ENCODE measurements at regions of chr9 and their contacts with region 1.

Region 1: GRCh38 chr9:21789541-21790037 is 12.8 kb upstream of the MTAP start:
- DNase-seq: peak; percentile 92
- ATAC-seq: peak; percentile 76
- H3K4me3 ChIP-seq: no peak overlapping the region
- H3K27ac ChIP-seq: peak overlapping the region; percentile 97
- H3K4me1 ChIP-seq: peaks cover 28 to 57% of the 10 kb centered on the region in 2 experiments
- H3K27me3 ChIP-seq: no peaks in the 10 kb centered on the region
- CTCF ChIP-seq: peak; percentile 50 to 96 (median 85)
- POLR2A ChIP-seq: no peak
- RAD21 ChIP-seq: peak; percentile 91

Region 2: GRCh38 chr9:21506626-21507484 is 282.7 kb before region 1 on chr9:
- CTCF ChIA-PET with region 1: no interaction called
- POLR2A ChIA-PET with region 1: no interaction called
- RAD21 ChIA-PET with region 1: no interaction called
- intact Hi-C with region 1: no loop called
- DNase-seq: no peak
- ATAC-seq: no peak
- H3K4me3 ChIP-seq: no peak overlapping the region
- H3K27ac ChIP-seq: peak overlapping the region; percentile 32; the same call in 1 of the 2 replicates
- H3K4me1 ChIP-seq: peaks cover 44 to 71% of the 10 kb centered on the region in 2 experiments
- H3K27me3 ChIP-seq: no peaks in the 10 kb centered on the region
- CTCF ChIP-seq: no peak
- POLR2A ChIP-seq: no peak
- RAD21 ChIP-seq: no peak

Region 3: GRCh38 chr9:21523021-21524014 is 266.3 kb before region 1 on chr9:
- CTCF ChIA-PET with region 1: no interaction called
- POLR2A ChIA-PET with region 1: no interaction called
- RAD21 ChIA-PET with region 1: no interaction called
- intact Hi-C with region 1: loop called (anchors 2 kb)
- DNase-seq: no peak
- ATAC-seq: peak; percentile 4; the same call in 1 of the 2 replicates
- H3K4me3 ChIP-seq: no peak overlapping the region
- H3K27ac ChIP-seq: peak overlapping the region; percentile 28; the same call in 1 of the 2 replicates
- H3K4me1 ChIP-seq: peaks cover 9 to 36% of the 10 kb centered on the region in 2 experiments; a peak in 3 of 4 replicates
- H3K27me3 ChIP-seq: no peaks in the 10 kb centered on the region
- CTCF ChIP-seq: no peak
- POLR2A ChIP-seq: no peak
- RAD21 ChIP-seq: 0 out of 2 replicates have a peak, but pooled peaks have one; percentile 4

Region 4: GRCh38 chr9:21576331-21577189 is 213.0 kb before region 1 on chr9:
- CTCF ChIA-PET with region 1: interaction called, 6 read pairs
- POLR2A ChIA-PET with region 1: interaction called, 4 read pairs
- RAD21 ChIA-PET with region 1: no interaction called
- intact Hi-C with region 1: loop called (anchors 5 kb)
- DNase-seq: peak; percentile 93
- ATAC-seq: peak; percentile 76
- H3K4me3 ChIP-seq: peak overlapping the region in 1 of 2 experiments; percentile 8; a peak in 1 of 4 replicates
- H3K27ac ChIP-seq: peak overlapping the region; percentile 99
- H3K4me1 ChIP-seq: peaks cover 89 to 100% of the 10 kb centered on the region in 2 experiments
- H3K27me3 ChIP-seq: no peaks in the 10 kb centered on the region
- CTCF ChIP-seq: no peak
- POLR2A ChIP-seq: no peak
- RAD21 ChIP-seq: peak; percentile 33

Region 5: DNA sequence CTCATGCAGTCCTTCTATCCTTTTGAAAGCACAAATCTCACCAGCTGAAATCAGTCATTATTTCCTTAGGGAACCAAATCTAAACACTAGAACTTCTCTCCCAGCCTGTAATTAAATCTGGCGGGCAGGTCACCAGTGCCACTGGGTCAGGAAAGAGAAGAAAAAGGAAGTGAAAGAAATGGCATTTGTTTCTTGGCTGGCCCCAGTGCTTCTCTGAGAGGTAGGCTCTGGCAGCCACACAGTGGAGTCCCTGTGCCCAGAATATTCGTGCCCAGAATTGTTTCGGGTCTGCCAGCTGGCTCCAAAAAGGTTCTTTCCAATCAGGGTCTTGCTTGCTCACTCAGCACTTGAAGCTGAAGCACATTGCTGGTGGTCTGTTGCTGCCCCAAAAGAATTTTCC is 121.1 kb before region 1 on chr9:
- CTCF ChIA-PET with region 1: interaction called, 6 read pairs
- POLR2A ChIA-PET with region 1: interaction called, 10 read pairs
- RAD21 ChIA-PET with region 1: no interaction called
- intact Hi-C with region 1: no loop called
- DNase-seq: no peak
- ATAC-seq: no peak
- H3K4me3 ChIP-seq: no peak overlapping the region
- H3K27ac ChIP-seq: peak overlapping the region; percentile 99
- H3K4me1 ChIP-seq: peaks cover 58 to 81% of the 10 kb centered on the region in 2 experiments
- H3K27me3 ChIP-seq: no peaks in the 10 kb centered on the region
- CTCF ChIP-seq: no peak
- POLR2A ChIP-seq: no peak
- RAD21 ChIP-seq: no peak